GM12878 (cell line): ENCODE measurements at regions of chr5 and their contacts with region 1.

Region 1: DNA sequence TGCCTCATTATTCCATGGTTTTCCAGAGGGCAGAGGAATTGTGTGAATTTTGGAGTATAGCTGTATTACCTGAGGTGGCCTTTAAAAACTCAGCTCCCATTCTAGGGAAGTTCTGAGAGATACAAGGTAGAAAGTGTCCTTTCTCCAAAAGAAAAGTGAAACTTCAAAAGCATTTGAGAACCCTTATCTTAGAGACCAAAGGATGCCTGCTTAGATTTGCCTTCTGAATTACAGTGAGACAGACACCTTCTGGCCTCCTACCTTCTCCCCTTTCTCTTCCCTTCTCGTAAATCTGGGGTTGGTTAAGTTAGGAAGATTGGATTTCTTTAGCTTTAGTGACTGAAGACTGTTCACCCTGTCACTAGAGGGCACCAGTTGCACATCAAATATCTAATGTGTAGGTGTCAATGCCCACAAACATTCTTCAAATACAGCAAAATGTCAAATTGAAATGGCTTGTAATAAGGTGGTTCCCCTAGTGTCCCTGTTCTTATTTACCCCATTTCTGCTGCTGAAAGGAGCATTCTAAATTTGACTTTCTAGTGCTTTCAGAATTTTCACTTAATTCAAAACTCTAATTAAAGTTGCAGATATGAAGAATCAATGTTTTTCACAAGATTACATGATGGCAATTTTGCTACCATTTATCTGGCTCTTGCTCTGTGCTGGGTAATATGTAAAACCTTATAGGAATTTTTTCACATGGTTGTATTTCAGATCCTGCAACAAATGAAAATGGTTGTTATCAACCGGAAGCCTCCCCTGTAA is 46.7 kb downstream of the PRRC1 start:
- DNase-seq: no peak
- ATAC-seq: peak; percentile 81
- H3K4me3 ChIP-seq: no peak overlapping the region
- H3K27ac ChIP-seq: no peak overlapping the region
- H3K4me1 ChIP-seq: peaks cover 13% of the 10 kb centered on the region
- H3K27me3 ChIP-seq: no peaks in the 10 kb centered on the region
- CTCF ChIP-seq: peak; percentile 67 to 88 (median 70); a peak in 5 of 6 replicates
- EP300 ChIP-seq: 0 out of 4 replicates have a peak, but pooled peaks of 1 of the 2 experiments have one; percentile 14
- POLR2A ChIP-seq: no peak
- RAD21 ChIP-seq: peak; percentile 93

Region 2: GRCh38 chr5:126857472-126858410 is 706.4 kb before region 1 on chr5:
- CTCF ChIA-PET with region 1: no interaction called
- POLR2A ChIA-PET with region 1: no interaction called
- RAD21 ChIA-PET with region 1: no interaction called
- SMC1A ChIA-PET with region 1: no interaction called
- in situ Hi-C with region 1: no loop called
- intact Hi-C with region 1: no loop called
- DNase-seq: no peak
- ATAC-seq: no peak
- H3K4me3 ChIP-seq: no peak overlapping the region
- H3K27ac ChIP-seq: no peak overlapping the region
- H3K4me1 ChIP-seq: peaks cover under 1% of the 10 kb centered on the region; the same call in 1 of the 2 replicates
- H3K27me3 ChIP-seq: no peaks in the 10 kb centered on the region
- CTCF ChIP-seq: no peak
- EP300 ChIP-seq: no peak
- POLR2A ChIP-seq: no peak
- RAD21 ChIP-seq: no peak

Region 3: DNA sequence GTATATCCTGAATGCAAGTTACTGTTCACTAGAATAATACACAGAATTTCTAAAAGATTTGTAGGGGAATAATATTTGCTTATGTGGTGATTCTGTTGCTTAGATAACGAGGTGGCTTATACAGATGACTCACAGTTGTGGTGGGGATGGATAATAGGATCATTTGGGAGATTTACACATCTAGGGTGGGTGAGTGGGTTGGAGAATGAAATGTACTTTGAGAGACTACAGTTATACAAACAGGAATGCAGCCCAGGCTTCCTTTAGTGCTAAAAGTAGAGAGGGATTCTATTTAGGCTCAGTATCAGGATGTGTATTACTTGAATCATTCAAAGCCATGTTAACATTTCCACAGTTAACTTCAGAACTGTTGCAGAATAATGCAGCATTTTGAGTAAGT is 86.5 kb after region 1 on chr5:
- CTCF ChIA-PET with region 1: interaction called, 4 read pairs
- POLR2A ChIA-PET with region 1: no interaction called
- RAD21 ChIA-PET with region 1: interaction called, 4 read pairs
- SMC1A ChIA-PET with region 1: no interaction called
- in situ Hi-C with region 1: no loop called
- intact Hi-C with region 1: loop called (anchors 5 kb)
- DNase-seq: no peak
- ATAC-seq: no peak
- H3K4me3 ChIP-seq: no peak overlapping the region
- H3K27ac ChIP-seq: no peak overlapping the region
- H3K4me1 ChIP-seq: no peaks in the 10 kb centered on the region
- H3K27me3 ChIP-seq: no peaks in the 10 kb centered on the region
- CTCF ChIP-seq: no peak
- EP300 ChIP-seq: no peak
- POLR2A ChIP-seq: no peak
- RAD21 ChIP-seq: no peak

Region 4: DNA sequence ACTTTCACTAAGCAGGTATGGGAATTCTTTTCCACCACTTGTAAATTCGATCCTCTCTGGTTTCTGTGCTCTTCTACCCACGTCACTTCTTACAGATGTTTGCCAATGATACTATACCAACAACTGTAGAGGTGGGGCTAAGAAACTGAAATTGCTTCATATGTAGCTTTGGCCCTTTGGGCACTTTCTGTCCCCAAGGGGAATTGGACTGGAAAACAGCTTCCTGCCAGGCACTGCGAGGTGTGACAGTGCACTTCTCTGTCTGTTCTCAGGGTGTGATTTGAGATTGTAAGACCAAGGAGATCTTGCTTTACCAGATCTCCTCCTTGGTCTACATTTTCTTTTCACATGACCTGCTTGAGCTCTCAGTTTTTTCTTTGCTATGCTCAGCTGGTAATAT is 303.2 kb after region 1 on chr5:
- CTCF ChIA-PET with region 1: interaction called, 12 read pairs
- POLR2A ChIA-PET with region 1: no interaction called
- RAD21 ChIA-PET with region 1: interaction called, 7 read pairs
- SMC1A ChIA-PET with region 1: interaction called, 6 read pairs
- in situ Hi-C with region 1: loop called (anchors 5 kb)
- intact Hi-C with region 1: no loop called
- DNase-seq: no peak
- ATAC-seq: peak; percentile 79
- H3K4me3 ChIP-seq: no peak overlapping the region
- H3K27ac ChIP-seq: no peak overlapping the region
- H3K4me1 ChIP-seq: no peaks in the 10 kb centered on the region
- H3K27me3 ChIP-seq: no peaks in the 10 kb centered on the region
- CTCF ChIP-seq: no peak
- EP300 ChIP-seq: no peak
- POLR2A ChIP-seq: no peak
- RAD21 ChIP-seq: no peak

Region 5: GRCh38 chr5:128014578-128014977 is 450.4 kb after region 1 on chr5:
- CTCF ChIA-PET with region 1: no interaction called
- POLR2A ChIA-PET with region 1: no interaction called
- RAD21 ChIA-PET with region 1: no interaction called
- SMC1A ChIA-PET with region 1: no interaction called
- in situ Hi-C with region 1: no loop called
- intact Hi-C with region 1: no loop called
- DNase-seq: no peak
- ATAC-seq: no peak
- H3K4me3 ChIP-seq: no peak overlapping the region
- H3K27ac ChIP-seq: no peak overlapping the region
- H3K4me1 ChIP-seq: no peaks in the 10 kb centered on the region
- H3K27me3 ChIP-seq: no peaks in the 10 kb centered on the region
- CTCF ChIP-seq: no peak
- EP300 ChIP-seq: no peak
- POLR2A ChIP-seq: no peak
- RAD21 ChIP-seq: no peak

Region 6: DNA sequence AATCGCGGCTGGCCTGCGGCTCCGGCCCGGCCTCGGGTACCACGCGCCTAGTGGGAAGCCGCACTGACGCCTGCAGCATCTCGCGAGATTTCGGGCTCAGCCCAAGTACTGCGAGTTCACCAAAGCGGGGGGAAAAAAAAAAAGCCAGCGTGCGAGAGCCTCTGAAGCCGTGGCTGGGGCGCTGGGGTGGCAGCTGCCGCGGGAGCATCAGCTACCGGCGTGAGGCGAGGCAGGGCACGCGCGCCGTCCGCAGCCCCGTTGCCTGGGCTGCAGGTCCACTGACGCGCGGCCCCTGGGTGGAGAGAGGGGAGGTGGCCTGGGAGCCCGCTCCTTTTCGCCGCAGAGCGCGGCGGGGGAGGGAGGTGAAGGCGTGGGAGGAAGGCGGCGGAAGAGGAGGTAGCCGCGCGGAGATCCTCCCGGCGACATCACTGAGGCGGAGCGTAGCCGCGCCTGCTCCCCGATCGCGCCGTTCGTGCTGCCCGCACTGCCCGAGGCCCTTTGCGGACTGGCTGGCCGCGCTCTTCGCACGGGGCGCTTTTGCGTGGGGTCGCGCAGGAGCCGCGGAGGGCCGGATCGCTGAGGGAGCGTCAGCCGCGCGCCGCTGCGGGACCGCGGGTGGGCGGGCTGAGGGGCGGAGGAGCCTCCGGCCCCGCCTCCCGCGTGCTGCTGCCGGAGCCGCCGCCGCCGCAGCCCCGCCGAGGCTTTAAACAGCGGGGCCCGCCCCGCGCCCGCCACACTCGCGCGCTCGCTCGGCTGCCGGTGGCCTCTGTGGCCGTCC is 519.0 kb after region 1 on chr5 and contains the start of gene SLC12A2:
- CTCF ChIA-PET with region 1: interaction called, 4 read pairs
- POLR2A ChIA-PET with region 1: interaction called, 4 read pairs
- RAD21 ChIA-PET with region 1: interaction called, 5 read pairs
- SMC1A ChIA-PET with region 1: interaction called, 7 read pairs
- in situ Hi-C with region 1: loop called (anchors 10 kb)
- intact Hi-C with region 1: loop called (anchors 2 kb)
- DNase-seq: peak; percentile 74
- ATAC-seq: peak; percentile 68
- H3K4me3 ChIP-seq: peak within 1 kb of the TSS; percentile 86
- H3K27ac ChIP-seq: peak within 1 kb of the TSS; percentile 90
- H3K4me1 ChIP-seq: no peaks in the 10 kb centered on the region; the same call in 1 of the 2 replicates
- H3K27me3 ChIP-seq: no peaks in the 10 kb centered on the region
- CTCF ChIP-seq: no peak
- EP300 ChIP-seq: peak in 1 of 2 experiments; percentile 6; a peak in 1 of 4 replicates
- POLR2A ChIP-seq: peak; percentile 90
- RAD21 ChIP-seq: no peak
- polyA plus RNA-seq, gene SLC12A2: 6.3 to 6.9 TPM

Region 7: DNA sequence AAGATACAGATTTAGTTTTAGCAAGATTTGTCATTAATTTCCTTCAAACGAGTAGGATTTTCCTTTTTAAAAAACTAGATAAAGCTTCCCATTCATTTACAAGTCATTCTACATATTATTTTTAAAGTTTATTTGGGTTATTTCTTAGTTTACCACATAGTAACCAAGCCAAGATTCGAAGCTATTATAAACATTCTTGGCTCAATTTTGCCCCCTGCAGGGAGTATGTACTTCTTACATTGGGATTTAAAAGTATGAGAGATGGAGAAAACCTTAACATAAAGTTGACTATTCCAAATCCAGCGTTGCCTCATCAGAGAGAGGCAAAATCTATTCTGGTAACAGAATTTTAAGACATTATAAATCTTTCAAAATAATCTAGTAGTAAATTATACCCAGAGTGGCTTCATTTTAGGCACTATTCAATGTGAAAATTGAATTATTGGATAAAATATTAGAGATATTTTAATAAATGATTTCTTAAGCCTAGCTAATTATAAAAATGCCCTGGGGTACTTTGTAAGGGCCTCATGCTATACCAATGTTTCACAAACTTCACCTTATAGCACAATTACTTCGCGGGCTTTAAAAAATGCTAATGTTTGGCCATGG is 934.8 kb after region 1 on chr5:
- CTCF ChIA-PET with region 1: interaction called, 10 read pairs
- POLR2A ChIA-PET with region 1: no interaction called
- RAD21 ChIA-PET with region 1: interaction called, 6 read pairs
- SMC1A ChIA-PET with region 1: interaction called, 3 read pairs
- in situ Hi-C with region 1: loop called (anchors 5 kb)
- intact Hi-C with region 1: loop called (anchors 5 kb)
- DNase-seq: no peak
- ATAC-seq: peak; percentile 57
- H3K4me3 ChIP-seq: no peak overlapping the region
- H3K27ac ChIP-seq: no peak overlapping the region
- H3K4me1 ChIP-seq: no peaks in the 10 kb centered on the region
- H3K27me3 ChIP-seq: no peaks in the 10 kb centered on the region
- CTCF ChIP-seq: peak; percentile 28 to 41 (median 30); a peak in 4 of 6 replicates
- EP300 ChIP-seq: no peak
- POLR2A ChIP-seq: no peak
- RAD21 ChIP-seq: peak; percentile 71

Region 8: GRCh38 chr5:129120158-129120581 is 1556.0 kb after region 1 on chr5:
- CTCF ChIA-PET with region 1: no interaction called
- POLR2A ChIA-PET with region 1: no interaction called
- RAD21 ChIA-PET with region 1: no interaction called
- SMC1A ChIA-PET with region 1: no interaction called
- in situ Hi-C with region 1: loop called (anchors 25 kb)
- intact Hi-C with region 1: no loop called
- DNase-seq: peak; percentile 24
- ATAC-seq: peak; percentile 90
- H3K4me3 ChIP-seq: no peak overlapping the region
- H3K27ac ChIP-seq: no peak overlapping the region
- H3K4me1 ChIP-seq: peaks cover 5% of the 10 kb centered on the region; the same call in 1 of the 2 replicates
- H3K27me3 ChIP-seq: no peaks in the 10 kb centered on the region
- CTCF ChIP-seq: no peak
- EP300 ChIP-seq: no peak
- POLR2A ChIP-seq: no peak
- RAD21 ChIP-seq: no peak